ENCODE measurements at regions of chr14 and their contacts with region 1.

Region 1: DNA sequence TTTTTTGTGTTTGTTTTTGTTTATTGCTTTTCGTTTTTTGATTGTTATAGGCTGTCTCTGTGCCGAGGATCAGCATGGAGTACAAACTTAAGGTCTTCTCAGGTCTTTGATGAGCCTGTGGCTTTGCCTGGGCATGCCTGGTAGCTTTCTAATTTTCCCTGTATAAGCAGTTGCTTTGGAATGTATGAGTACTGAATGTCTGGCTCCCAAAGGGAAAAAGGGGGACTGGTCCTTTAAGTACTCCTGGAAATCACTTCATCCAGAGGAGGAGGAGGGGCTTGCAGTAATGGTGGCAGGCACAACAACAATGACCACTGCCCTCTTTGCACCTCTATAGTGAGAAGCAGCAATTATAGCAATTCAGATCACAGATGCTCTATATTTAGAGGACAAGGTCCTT is 67.6 kb upstream of the TTC7B start:
- DNase-seq: no peak
- H3K4me3 ChIP-seq: no peak overlapping the region
- H3K27ac ChIP-seq: no peak overlapping the region
- H3K4me1 ChIP-seq: no peaks in the 10 kb centered on the region
- H3K27me3 ChIP-seq: no peaks in the 10 kb centered on the region
- CTCF ChIP-seq: no peak
- EP300 ChIP-seq: no peak
- POLR2A ChIP-seq: no peak

Region 2: GRCh38 chr14:91286530-91286937 is 402.8 kb after region 1 on chr14:
- in situ Hi-C with region 1: loop called in 1 of 4 experiments (anchors 25 kb)
- intact Hi-C with region 1: no loop called
- DNase-seq: peak; percentile 77
- H3K4me3 ChIP-seq: no peak overlapping the region
- H3K27ac ChIP-seq: no peak overlapping the region
- H3K4me1 ChIP-seq: peaks cover 0 to 14% (median 6%) of the 10 kb centered on the region in 4 donors
- H3K27me3 ChIP-seq: no peaks in the 10 kb centered on the region
- CTCF ChIP-seq: peak; percentile 86 to 91 (median 89)
- EP300 ChIP-seq: no peak
- POLR2A ChIP-seq: no peak

Region 3: DNA sequence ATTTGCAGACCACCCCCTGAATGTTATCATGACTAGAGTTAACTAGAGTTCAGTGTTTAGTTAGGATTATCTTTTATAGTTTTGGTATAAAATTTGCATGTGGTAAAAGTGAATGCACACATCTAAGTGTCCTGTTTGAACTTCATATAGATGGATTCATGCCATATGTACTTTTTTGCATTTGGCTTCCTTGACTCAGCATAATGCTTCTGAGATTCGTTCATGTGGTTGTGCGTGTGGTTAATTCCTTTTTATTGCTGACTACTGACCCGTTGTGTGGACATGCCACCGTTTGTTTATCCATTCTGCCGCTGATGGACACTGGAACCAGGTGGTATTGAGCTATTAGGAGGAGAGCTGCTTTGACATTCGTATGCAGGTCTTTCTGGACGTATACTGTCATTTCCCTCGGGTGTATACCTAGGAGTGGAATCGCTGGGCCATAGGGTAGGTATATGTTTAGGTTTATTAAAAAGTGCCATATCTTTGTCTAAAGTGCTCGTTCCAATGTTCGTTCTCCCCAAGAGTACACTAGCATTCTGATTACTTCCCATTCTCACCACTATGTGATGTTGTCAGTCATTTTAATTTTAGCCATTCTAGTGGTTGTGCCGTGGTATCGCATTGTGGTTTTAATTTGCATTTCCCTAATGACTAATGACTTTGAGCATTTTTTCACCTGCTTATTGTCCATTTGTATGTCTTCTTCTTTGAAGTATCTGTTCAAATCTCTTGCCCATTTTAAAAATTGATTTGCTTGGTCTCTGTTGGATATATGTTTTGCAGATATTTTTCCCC is 1667.5 kb after region 1 on chr14:
- in situ Hi-C with region 1: no loop called
- intact Hi-C with region 1: loop called (anchors 5 kb)
- DNase-seq: no peak
- H3K4me3 ChIP-seq: no peak overlapping the region
- H3K27ac ChIP-seq: peak overlapping the region; percentile 5 to 67 (median 46)
- H3K4me1 ChIP-seq: peaks cover 13 to 33% (median 24%) of the 10 kb centered on the region in 4 donors
- H3K27me3 ChIP-seq: no peaks in the 10 kb centered on the region
- CTCF ChIP-seq: peak in 3 of 5 experiments; percentile 13 to 43 (median 41)
- EP300 ChIP-seq: no peak
- POLR2A ChIP-seq: no peak

Measured in transverse colon (tissue), 4 donors.